ENCODE measurements at regions of chr6 and their contacts with region 1.

Region 1: DNA sequence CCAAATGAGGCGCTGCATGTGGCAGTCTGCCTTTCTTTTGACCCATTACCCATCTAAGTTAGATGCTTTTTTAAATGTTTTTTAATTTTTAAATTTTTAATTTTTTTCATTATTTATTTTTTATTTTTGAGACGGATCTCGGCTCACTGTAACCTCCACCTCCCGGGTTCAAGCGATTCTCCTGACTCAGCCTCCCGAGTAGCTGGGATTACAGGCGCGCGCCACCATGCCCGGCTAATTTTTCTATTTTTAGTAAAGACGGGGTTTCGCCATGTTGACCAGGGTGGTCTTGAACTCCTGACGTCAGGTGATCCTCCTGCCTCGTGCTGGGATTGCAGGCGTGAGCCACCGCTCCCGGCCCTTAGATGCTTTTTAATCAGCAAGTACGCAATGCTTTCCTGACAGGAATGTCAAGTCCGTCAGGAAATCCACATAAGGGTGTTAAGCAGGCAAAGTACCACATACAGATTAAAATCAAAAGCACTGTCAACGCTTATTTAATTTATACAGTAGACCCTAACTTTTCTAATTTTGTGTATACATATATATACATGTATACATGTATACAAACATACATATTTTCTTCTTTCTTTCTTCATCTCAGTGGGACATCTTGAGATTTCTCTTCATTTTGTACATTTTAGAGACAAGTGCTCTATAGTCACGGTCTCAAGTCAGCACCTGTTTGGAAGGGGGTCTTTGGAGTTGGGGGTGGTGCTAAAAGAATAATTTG is 995 bp upstream of the GSTA4 start:
- DNase-seq: peak; percentile 75
- ATAC-seq: no peak
- H3K4me3 ChIP-seq: peak overlapping the region; percentile 60
- H3K27ac ChIP-seq: no peak overlapping the region
- H3K4me1 ChIP-seq: peaks cover 24% of the 10 kb centered on the region
- H3K27me3 ChIP-seq: no peaks in the 10 kb centered on the region
- CTCF ChIP-seq: no peak

Region 2: GRCh38 chr6:52691718-52692117 is 304.4 kb before region 1 on chr6:
- CTCF ChIA-PET with region 1: no interaction called
- POLR2A ChIA-PET with region 1: no interaction called
- intact Hi-C with region 1: loop called (anchors 2 kb)
- DNase-seq: peak; percentile 16
- ATAC-seq: peak; percentile 45; the same call in 1 of the 2 replicates
- H3K4me3 ChIP-seq: no peak overlapping the region
- H3K27ac ChIP-seq: no peak overlapping the region
- H3K4me1 ChIP-seq: no peaks in the 10 kb centered on the region
- H3K27me3 ChIP-seq: no peaks in the 10 kb centered on the region
- CTCF ChIP-seq: peak; percentile 52

Region 3: GRCh38 chr6:52815167-52816092 is 180.6 kb before region 1 on chr6:
- CTCF ChIA-PET with region 1: no interaction called
- POLR2A ChIA-PET with region 1: no interaction called
- intact Hi-C with region 1: loop called (anchors 2 kb)
- DNase-seq: peak; percentile 74
- ATAC-seq: peak; percentile 92
- H3K4me3 ChIP-seq: no peak overlapping the region
- H3K27ac ChIP-seq: no peak overlapping the region
- H3K4me1 ChIP-seq: no peaks in the 10 kb centered on the region
- H3K27me3 ChIP-seq: no peaks in the 10 kb centered on the region
- CTCF ChIP-seq: peak; percentile 79

Region 4: DNA sequence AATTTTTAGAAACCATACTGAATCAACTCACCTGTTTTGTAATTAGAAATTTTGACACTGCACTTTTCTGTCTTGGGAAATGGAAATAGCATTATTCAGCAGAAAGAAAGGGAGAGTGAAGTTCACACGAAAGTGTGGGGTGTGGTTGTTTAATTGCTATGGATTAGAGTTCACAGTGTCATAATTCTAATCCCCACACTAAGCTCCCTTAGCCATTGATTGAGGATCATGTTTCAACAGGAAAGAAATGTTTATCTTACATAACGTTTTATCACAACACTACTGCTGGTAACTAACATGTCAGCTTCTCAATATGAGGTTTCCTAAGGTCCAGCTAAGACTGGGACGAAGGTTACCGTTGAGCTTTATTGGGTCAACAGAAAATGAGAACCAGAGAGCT is 124.0 kb before region 1 on chr6:
- CTCF ChIA-PET with region 1: no interaction called
- POLR2A ChIA-PET with region 1: no interaction called
- intact Hi-C with region 1: no loop called
- DNase-seq: no peak
- ATAC-seq: no peak
- H3K4me3 ChIP-seq: no peak overlapping the region
- H3K27ac ChIP-seq: no peak overlapping the region
- H3K4me1 ChIP-seq: peaks cover 8% of the 10 kb centered on the region
- H3K27me3 ChIP-seq: no peaks in the 10 kb centered on the region
- CTCF ChIP-seq: no peak

Region 5: DNA sequence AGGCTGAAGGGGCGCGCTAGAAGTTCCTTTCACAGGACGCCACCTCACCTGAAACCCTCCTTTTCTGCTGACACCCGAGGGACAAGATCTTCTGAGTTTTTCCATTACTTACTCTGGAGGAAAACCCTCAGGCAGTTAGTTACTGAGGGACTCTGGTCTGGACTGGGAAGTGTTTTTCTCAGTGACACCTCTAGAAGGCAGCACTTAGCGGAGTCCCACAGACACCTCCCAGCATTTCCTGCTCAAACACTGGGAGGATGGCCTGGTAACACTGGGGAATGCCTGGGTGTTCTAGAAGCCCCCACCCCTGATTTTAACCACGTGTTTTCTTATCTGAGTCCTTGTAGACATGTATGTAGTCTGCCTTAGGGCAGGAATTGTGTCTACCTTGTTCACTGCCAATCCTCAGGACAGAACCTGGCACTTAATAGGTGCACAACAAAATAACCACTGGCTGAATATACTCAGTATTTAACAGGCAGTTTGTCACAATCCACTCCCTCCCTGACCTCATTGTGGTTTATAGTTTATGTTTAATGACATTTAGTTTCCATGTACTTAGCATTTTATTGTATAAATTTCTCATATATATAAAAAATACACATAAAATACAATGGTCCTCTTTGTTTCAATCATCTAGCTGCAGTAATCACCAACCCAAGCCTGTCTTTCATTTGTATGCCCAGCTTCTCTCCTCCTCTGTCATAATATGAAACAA is 91.4 kb before region 1 on chr6:
- CTCF ChIA-PET with region 1: no interaction called
- POLR2A ChIA-PET with region 1: no interaction called
- intact Hi-C with region 1: loop called (anchors 1 kb)
- DNase-seq: peak; percentile 30
- ATAC-seq: peak; percentile 81
- H3K4me3 ChIP-seq: no peak overlapping the region
- H3K27ac ChIP-seq: peak overlapping the region; percentile 35; the same call in 1 of the 2 replicates
- H3K4me1 ChIP-seq: peaks cover 26% of the 10 kb centered on the region; the same call in 1 of the 2 replicates
- H3K27me3 ChIP-seq: no peaks in the 10 kb centered on the region
- CTCF ChIP-seq: peak; percentile 57

Region 6: GRCh38 chr6:52969359-52969758 is 26.7 kb before region 1 on chr6:
- CTCF ChIA-PET with region 1: no interaction called
- POLR2A ChIA-PET with region 1: no interaction called
- intact Hi-C with region 1: no loop called
- DNase-seq: no peak
- ATAC-seq: no peak
- H3K4me3 ChIP-seq: no peak overlapping the region
- H3K27ac ChIP-seq: no peak overlapping the region
- H3K4me1 ChIP-seq: no peaks in the 10 kb centered on the region
- H3K27me3 ChIP-seq: no peaks in the 10 kb centered on the region
- CTCF ChIP-seq: no peak

Region 7: DNA sequence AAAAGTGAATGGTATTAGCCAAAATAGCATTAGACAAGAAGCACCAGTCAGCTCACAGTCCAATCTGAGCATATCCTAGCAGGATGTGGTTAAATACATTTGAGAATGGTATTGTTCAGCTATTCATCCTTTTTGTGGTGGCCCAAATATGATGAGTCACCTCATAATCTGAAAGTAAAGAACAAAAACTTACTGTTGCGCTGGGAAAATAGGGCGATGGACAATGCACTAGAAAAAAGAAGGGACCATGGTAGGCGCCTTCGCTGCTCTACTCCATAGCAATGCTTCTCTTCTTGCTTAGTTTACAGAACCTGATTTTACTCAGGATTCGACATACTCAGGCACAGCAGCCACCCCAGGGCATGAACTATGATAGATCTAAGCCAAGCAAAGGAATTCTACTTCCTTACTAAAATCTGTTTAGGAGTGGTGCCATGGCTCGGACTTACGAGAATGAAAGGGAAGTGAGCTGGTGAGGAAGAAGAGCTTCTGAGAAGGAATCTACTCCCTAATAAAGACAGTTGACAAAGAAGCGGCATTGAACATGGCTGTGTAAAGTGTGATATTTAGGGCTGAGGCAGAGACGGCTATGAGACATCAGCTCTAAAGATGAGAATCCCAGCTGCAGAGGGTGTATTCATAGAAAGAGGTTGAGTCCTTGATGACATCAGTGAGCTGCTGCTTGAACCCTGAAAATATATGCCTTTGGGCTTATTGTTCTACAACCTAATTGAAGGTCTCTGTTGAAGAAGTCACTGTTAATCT is 52.5 kb after region 1 on chr6:
- CTCF ChIA-PET with region 1: interaction called, 4 read pairs
- POLR2A ChIA-PET with region 1: interaction called, 4 read pairs
- intact Hi-C with region 1: loop called (anchors 1 kb)
- DNase-seq: peak; percentile 93
- ATAC-seq: peak; percentile 86
- H3K4me3 ChIP-seq: peak overlapping the region; percentile 67
- H3K27ac ChIP-seq: peak overlapping the region; percentile 96
- H3K4me1 ChIP-seq: peaks cover 29% of the 10 kb centered on the region
- H3K27me3 ChIP-seq: no peaks in the 10 kb centered on the region
- CTCF ChIP-seq: no peak

Region 8: DNA sequence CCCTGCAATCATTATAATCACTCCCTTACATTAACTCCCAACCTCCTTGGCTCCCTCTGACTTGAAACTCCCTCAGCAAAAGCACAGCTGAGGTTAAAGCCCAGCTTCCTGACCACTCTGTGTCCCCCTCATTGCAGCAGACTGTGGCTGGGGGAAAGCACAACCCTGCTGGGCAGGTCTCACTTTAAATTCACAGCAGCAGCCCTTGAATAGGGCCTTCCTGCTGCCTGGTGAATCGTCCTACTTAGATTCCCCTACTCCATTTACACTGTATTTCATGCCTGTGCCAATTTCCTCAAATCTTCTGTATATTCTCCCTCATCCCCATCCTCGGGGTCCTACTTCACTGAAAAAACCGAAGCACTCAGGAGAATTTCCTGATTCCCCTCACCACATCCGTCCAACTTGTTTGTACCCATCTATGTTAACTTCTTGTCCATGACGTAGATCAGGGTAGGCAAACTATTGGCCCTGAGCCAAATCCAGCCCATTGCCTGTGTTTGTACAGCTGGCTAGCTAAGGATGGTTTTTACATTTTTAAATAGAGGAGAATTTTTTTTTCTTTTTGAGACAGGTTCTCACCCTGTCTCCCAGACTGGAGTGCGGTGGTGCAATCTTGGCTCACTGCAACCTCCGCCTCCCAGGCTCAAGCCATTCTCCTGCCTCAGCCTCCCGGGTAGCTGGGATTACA is 184.0 kb after region 1 on chr6:
- CTCF ChIA-PET with region 1: no interaction called
- POLR2A ChIA-PET with region 1: no interaction called
- intact Hi-C with region 1: no loop called
- DNase-seq: no peak
- ATAC-seq: no peak
- H3K4me3 ChIP-seq: no peak overlapping the region
- H3K27ac ChIP-seq: no peak overlapping the region
- H3K4me1 ChIP-seq: peaks cover 5% of the 10 kb centered on the region; the same call in 1 of the 2 replicates
- H3K27me3 ChIP-seq: no peaks in the 10 kb centered on the region
- CTCF ChIP-seq: no peak

Measured in PC-3 (cell line).